RWPE1 (cell line): ENCODE measurements at regions of chr15 and their contacts with region 1.

Region 1: GRCh38 chr15:81562986-81563385 is 189.0 kb upstream of the TMC3 start:
- DNase-seq: no peak
- H3K27ac ChIP-seq: no peak overlapping the region
- CTCF ChIP-seq: no peak

Region 2: GRCh38 chr15:81547521-81548132 is 15.4 kb before region 1 on chr15:
- CTCF ChIA-PET with region 1: no interaction called
- POLR2A ChIA-PET with region 1: interaction called, 10 read pairs
- DNase-seq: no peak
- H3K27ac ChIP-seq: no peak overlapping the region
- CTCF ChIP-seq: no peak